ENCODE measurements at regions of chr6 and their contacts with region 1.

Region 1: DNA sequence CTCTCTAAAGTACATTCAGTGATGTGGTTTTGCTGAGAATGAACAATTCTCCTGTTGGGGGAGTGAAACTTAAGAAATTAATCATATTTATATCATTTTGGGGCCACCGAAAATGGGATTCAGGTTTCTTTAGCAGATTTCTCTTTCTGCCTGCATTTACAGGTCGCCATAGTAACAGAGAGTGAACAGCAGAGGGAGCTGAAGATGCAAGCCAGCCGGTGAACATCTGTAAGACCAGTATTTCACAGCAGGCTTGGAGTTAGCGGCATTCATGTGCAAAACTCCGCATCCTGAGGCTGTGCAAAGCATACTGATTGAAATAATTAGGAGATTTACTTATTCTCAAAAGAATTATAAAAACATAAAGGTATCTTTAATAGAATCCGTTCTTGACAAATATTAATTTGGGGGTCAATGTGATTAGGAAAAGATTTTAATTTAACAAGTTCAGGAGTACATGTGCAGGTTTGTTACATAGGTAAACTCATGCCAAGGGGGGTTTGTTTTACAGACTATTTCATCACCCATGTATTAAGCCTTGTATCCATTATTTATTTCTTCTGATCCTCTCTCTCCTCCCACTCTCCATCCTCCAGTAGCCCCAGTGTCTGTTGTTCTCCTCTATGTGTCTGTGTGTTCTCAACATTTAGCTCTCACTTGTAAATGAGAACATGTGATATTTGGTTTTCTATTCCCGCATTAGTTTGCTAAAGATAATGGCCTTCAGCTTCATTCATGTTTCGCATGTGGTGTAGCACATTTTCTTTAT is 17.8 kb upstream of the HSF2 start:
- DNase-seq: peak; percentile 60 to 66
- H3K4me3 ChIP-seq: no peak overlapping the region
- H3K4me3 Mint-ChIP-seq: no peak overlapping the region
- H3K27ac Mint-ChIP-seq: no peak overlapping the region
- H3K4me1 ChIP-seq: no peaks in the 10 kb centered on the region
- H3K4me1 Mint-ChIP-seq: no peaks in the 10 kb centered on the region
- H3K27me3 ChIP-seq: no peaks in the 10 kb centered on the region
- H3K27me3 Mint-ChIP-seq: peaks cover 4% of the 10 kb centered on the region
- CTCF ChIP-seq: peak; percentile 76 to 81

Region 2: DNA sequence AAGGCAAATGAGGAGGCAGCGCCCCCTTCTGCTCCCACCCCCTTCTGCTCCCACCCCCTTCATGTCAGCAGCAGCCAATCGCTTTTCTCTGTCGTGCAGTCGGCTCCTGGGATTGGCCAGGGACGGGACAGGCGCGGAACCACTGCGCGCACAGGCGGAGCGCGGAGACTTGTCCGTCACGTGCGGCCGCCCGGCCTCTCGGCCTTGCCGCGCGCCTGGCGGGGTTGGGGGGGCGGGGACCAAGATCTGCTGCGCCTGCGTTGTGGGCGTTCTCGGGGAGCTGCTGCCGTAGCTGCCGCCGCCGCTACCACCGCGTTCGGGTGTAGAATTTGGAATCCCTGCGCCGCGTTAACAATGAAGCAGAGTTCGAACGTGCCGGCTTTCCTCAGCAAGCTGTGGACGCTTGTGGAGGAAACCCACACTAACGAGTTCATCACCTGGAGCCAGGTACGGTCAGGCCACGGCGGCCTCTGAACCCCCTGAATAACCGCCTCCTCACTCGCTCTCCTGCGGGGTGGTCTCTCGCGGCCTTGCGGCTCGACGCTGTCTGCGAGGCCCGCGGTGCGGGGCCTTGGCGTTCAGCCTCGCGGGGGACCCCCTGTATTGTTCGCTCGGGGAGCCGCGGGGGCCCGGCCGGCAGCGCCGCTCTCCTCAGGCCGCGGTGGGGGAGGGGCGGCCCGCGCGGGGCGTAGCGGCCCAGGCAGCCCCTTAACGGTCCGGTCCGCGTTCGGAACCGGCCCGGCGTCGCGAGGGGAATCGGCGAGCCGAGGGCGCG is 17.9 kb after region 1 on chr6 and contains the start of gene HSF2:
- CTCF ChIA-PET with region 1: interaction called, 4 read pairs
- POLR2A ChIA-PET with region 1: interaction called, 5 read pairs
- intact Hi-C with region 1: loop called (anchors 2 kb)
- DNase-seq: peak; percentile 95 to 97
- H3K4me3 ChIP-seq: peak within 1 kb of the TSS; percentile 84
- H3K4me3 Mint-ChIP-seq: peak within 1 kb of the TSS; percentile 94
- H3K27ac Mint-ChIP-seq: peak within 1 kb of the TSS; percentile 96
- H3K4me1 ChIP-seq: 0 out of 2 replicates have a peak, but pooled peaks cover 10% of the 10 kb centered on the region
- H3K4me1 Mint-ChIP-seq: peaks cover 8% of the 10 kb centered on the region
- H3K27me3 ChIP-seq: no peaks in the 10 kb centered on the region
- H3K27me3 Mint-ChIP-seq: peaks cover 4% of the 10 kb centered on the region
- CTCF ChIP-seq: peak in 1 of 2 experiments; percentile 53
- total RNA-seq, gene HSF2: 12.1 and 12.3 TPM in 2 replicates

Region 3: DNA sequence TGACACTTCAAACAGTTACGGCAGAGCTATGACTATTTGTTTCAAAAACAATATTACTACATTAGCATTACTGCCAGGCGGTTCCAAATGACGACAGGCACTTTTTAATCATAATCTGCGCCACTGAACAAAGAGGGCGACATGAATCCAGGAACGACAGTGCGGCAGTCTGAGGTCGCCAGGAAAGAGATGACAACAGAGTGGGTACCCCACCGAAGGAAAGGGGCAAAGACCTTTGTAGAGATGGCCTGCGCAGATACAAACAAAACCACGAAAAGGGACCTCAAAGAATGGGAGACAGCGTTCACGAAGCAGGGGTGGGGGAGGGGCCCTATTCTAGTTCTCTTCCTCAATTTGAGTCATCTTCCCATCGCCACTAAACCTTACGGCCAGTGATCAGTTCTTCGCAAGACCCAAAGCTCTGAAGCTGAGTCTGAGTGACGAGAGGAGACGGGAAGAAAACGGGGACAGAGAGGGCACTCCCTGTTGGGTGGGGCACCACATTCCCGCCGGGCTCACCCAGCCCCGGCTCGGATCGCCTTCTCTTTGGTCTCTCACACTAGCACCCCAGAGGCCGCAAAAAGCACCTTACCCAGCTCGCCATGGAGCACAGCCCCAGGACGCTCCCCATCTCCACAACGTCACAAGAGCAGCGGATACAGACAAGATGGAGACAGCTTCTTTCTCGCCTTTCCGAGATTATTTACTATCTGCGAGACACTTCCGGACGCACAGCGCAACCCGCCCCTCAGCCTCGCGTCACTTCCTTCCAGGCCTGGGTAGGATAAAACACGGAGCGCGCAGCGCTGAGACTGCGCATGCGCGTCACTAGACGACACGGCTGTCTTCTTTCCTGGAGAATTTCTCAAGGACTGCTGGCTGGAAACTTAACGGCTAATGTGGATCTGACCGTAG is 89.7 kb after region 1 on chr6 and contains the start of gene SERINC1:
- CTCF ChIA-PET with region 1: no interaction called
- POLR2A ChIA-PET with region 1: no interaction called
- intact Hi-C with region 1: loop called (anchors 5 kb)
- DNase-seq: peak; percentile 90 to 93
- H3K4me3 ChIP-seq: peak within 1 kb of the TSS; percentile 92
- H3K4me3 Mint-ChIP-seq: peak within 1 kb of the TSS; percentile 93
- H3K27ac Mint-ChIP-seq: peak within 1 kb of the TSS; percentile 92
- H3K4me1 ChIP-seq: peaks cover 5% of the 10 kb centered on the region; the same call in 1 of the 2 replicates
- H3K4me1 Mint-ChIP-seq: no peaks in the 10 kb centered on the region
- H3K27me3 ChIP-seq: no peaks in the 10 kb centered on the region
- H3K27me3 Mint-ChIP-seq: no peaks in the 10 kb centered on the region
- CTCF ChIP-seq: no peak
- total RNA-seq, gene SERINC1: 70.2 and 72.2 TPM in 2 replicates

Region 4: GRCh38 chr6:122491919-122492555 is 110.4 kb after region 1 on chr6:
- CTCF ChIA-PET with region 1: no interaction called
- POLR2A ChIA-PET with region 1: no interaction called
- intact Hi-C with region 1: loop called (anchors 2 kb)
- DNase-seq: peak; percentile 63 to 76
- H3K4me3 ChIP-seq: no peak overlapping the region
- H3K4me3 Mint-ChIP-seq: no peak overlapping the region
- H3K27ac Mint-ChIP-seq: no peak overlapping the region
- H3K4me1 ChIP-seq: no peaks in the 10 kb centered on the region
- H3K4me1 Mint-ChIP-seq: peaks cover 6% of the 10 kb centered on the region
- H3K27me3 ChIP-seq: no peaks in the 10 kb centered on the region
- H3K27me3 Mint-ChIP-seq: peaks cover 2% of the 10 kb centered on the region
- CTCF ChIP-seq: peak; percentile 77 to 88

Region 5: GRCh38 chr6:122530440-122531046 is 148.9 kb after region 1 on chr6:
- CTCF ChIA-PET with region 1: interaction called, 18 read pairs
- POLR2A ChIA-PET with region 1: no interaction called
- intact Hi-C with region 1: loop called (anchors 1 kb)
- DNase-seq: peak; percentile 38 to 66
- H3K4me3 ChIP-seq: no peak overlapping the region
- H3K4me3 Mint-ChIP-seq: no peak overlapping the region
- H3K27ac Mint-ChIP-seq: no peak overlapping the region
- H3K4me1 ChIP-seq: no peaks in the 10 kb centered on the region
- H3K4me1 Mint-ChIP-seq: no peaks in the 10 kb centered on the region
- H3K27me3 ChIP-seq: no peaks in the 10 kb centered on the region
- H3K27me3 Mint-ChIP-seq: peaks cover 5% of the 10 kb centered on the region
- CTCF ChIP-seq: peak; percentile 81 to 90

Region 6: DNA sequence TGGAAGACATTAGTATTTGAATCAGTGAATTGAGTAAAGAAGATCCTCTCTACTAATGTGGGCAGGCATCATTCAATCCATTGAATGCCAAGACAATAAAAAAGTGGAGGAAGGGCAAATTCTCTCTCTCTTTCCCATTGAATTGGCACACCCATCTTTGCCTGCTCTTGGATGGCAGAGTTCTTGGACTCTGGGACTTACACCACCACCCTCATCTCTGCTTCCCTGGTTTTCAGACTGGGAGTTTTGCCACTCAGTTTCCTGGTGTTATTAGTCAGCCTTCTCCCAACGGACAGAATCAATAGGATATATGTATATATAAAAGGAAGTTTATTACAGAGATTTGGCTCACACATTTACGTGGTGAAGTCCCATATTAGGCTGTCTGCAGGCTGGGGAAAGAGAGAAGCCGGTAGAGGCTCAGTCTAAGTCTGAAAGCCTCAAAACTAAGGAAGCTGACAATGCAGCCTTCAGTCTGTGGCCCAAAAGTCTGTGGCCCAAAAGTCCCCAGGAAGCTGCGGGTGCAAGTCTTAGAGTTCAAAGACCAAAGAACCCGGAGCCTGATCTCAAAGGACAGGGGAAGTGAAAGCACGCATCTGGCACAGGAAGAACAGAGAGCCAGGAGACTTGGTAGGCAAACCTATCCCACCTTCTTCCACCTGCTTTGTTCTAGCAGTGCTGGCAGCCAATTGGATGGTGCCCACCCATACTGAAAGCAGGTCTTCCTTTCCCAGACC is 471.7 kb after region 1 on chr6:
- CTCF ChIA-PET with region 1: no interaction called
- POLR2A ChIA-PET with region 1: no interaction called
- intact Hi-C with region 1: no loop called
- DNase-seq: no peak
- H3K4me3 ChIP-seq: no peak overlapping the region
- H3K4me3 Mint-ChIP-seq: no peak overlapping the region
- H3K27ac Mint-ChIP-seq: no peak overlapping the region
- H3K4me1 ChIP-seq: no peaks in the 10 kb centered on the region
- H3K4me1 Mint-ChIP-seq: no peaks in the 10 kb centered on the region
- H3K27me3 ChIP-seq: no peaks in the 10 kb centered on the region
- H3K27me3 Mint-ChIP-seq: no peaks in the 10 kb centered on the region
- CTCF ChIP-seq: no peak